MCF 10A (cell line): ENCODE measurements at regions of chr7 and their contacts with region 1.

Region 1: GRCh38 chr7:149742075-149742701 is 31.2 kb downstream of the ZNF467 start:
- DNase-seq: peak; percentile 67
- H3K4me3 Mint-ChIP-seq: peak overlapping the region; percentile 71
- H3K27ac Mint-ChIP-seq: no peak overlapping the region
- H3K4me1 Mint-ChIP-seq: peaks cover 8% of the 10 kb centered on the region
- H3K27me3 Mint-ChIP-seq: no peaks in the 10 kb centered on the region
- CTCF ChIP-seq: peak; percentile 93

Region 2: GRCh38 chr7:148575640-148576411 is 1166.4 kb before region 1 on chr7:
- CTCF ChIA-PET with region 1: no interaction called
- POLR2A ChIA-PET with region 1: no interaction called
- intact Hi-C with region 1: no loop called
- DNase-seq: peak; percentile 76
- H3K4me3 Mint-ChIP-seq: no peak overlapping the region
- H3K27ac Mint-ChIP-seq: no peak overlapping the region
- H3K4me1 Mint-ChIP-seq: no peaks in the 10 kb centered on the region
- H3K27me3 Mint-ChIP-seq: no peaks in the 10 kb centered on the region
- CTCF ChIP-seq: peak; percentile 87

Region 3: DNA sequence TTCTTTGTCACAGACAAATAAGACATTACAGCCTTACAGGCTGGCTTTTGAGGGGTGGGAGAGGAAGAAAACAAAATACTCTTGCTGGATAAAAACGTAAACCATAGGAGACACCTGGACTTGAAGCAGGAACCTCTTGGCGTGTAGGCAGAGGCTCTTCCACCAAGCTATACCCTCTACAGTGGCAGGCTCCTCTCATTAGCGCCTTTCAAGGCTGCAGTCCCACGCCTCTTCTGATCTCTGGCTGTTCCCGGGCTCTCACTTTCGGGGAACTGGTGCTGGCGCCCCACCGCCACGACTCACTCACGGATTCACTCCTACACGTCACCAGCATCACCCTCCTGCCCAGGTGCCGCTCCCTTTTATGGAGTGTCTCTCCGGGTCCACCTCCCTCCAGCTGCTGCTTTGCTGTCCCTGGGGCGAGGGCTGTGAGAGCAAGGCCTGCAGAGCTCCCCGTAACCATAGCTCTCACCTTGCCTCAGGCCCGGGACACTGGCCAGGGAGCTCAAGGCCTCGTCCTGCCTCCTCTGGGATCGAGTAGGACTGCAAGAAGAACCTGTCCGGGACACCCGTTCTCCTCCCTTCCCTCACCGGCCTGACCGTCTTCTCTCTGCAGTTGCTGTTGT is 343.9 kb before region 1 on chr7:
- CTCF ChIA-PET with region 1: no interaction called
- POLR2A ChIA-PET with region 1: no interaction called
- intact Hi-C with region 1: no loop called
- DNase-seq: no peak
- H3K4me3 Mint-ChIP-seq: no peak overlapping the region
- H3K27ac Mint-ChIP-seq: no peak overlapping the region
- H3K4me1 Mint-ChIP-seq: no peaks in the 10 kb centered on the region
- H3K27me3 Mint-ChIP-seq: peaks cover 21% of the 10 kb centered on the region
- CTCF ChIP-seq: no peak

Region 4: DNA sequence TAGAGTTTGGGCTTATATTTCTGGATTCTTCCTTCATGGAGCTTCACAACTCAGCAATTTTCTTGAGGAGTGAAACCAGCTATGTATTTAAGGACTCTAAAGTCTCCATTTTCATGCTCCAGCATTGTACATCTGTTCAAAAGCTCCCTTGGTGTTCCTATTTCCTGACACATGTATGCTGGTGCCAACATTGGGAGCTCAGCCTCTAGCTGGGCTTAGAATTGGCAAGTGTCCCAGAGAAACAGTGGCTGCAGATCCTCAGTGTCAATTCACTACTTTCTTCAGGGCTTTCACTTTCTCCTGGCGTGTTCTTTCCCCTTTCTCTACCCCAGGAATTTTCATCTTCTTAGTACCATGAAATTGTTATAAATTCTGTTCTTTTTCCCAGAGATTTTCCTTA is 71.9 kb before region 1 on chr7:
- CTCF ChIA-PET with region 1: interaction called, 18 read pairs
- POLR2A ChIA-PET with region 1: interaction called, 3 read pairs
- intact Hi-C with region 1: no loop called
- DNase-seq: peak; percentile 67
- H3K4me3 Mint-ChIP-seq: no peak overlapping the region
- H3K27ac Mint-ChIP-seq: no peak overlapping the region
- H3K4me1 Mint-ChIP-seq: no peaks in the 10 kb centered on the region
- H3K27me3 Mint-ChIP-seq: peaks cover 80% of the 10 kb centered on the region
- CTCF ChIP-seq: no peak

Region 5: DNA sequence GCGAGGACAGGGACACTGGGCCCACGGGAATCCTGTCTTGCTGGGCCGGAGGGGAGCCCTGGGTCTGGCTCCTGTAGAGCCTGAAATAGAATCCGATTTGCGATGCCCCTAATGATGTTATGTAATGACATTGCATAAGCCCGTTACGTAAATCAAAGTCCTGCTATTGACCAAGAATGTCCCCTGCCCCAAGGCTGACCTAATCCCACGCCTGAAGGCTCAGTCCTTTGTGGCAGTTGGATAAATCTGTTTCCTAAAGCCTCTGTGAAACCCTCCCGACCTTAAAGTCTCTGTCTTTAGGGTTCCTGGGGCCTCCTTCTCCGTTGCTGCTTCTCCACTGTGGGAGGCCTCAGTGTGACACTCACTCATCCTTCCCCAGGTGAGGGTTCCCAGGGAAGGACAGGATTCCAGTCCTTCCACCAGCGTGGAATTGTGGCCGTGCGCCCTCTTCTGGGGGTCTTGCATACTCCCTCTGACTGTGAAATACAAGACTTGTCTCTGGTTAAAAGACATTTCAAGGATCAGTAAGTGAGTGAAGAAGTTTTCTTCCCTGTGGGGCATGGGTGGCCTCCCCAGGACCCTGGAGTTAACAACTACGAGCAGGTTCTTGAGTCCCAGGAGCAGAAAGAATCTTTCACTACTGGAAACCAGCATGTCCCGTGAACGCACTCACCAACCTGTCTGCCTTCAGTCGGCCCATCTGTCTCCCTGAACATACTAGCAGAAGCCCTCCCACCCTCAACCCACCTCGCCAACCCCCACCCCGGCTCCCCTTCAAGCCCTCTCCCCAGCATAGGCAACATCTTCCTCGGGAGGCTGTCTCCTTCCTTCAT is 11.4 kb after region 1 on chr7:
- CTCF ChIA-PET with region 1: interaction called, 28 read pairs
- POLR2A ChIA-PET with region 1: interaction called, 5 read pairs
- intact Hi-C with region 1: no loop called
- DNase-seq: peak; percentile 60
- H3K4me3 Mint-ChIP-seq: no peak overlapping the region
- H3K27ac Mint-ChIP-seq: no peak overlapping the region
- H3K4me1 Mint-ChIP-seq: no peaks in the 10 kb centered on the region
- H3K27me3 Mint-ChIP-seq: no peaks in the 10 kb centered on the region
- CTCF ChIP-seq: peak; percentile 44

Region 6: GRCh38 chr7:149766135-149766675 is 24.0 kb after region 1 on chr7:
- CTCF ChIA-PET with region 1: interaction called, 15 read pairs
- POLR2A ChIA-PET with region 1: no interaction called
- intact Hi-C with region 1: no loop called
- DNase-seq: no peak
- H3K4me3 Mint-ChIP-seq: no peak overlapping the region
- H3K27ac Mint-ChIP-seq: no peak overlapping the region
- H3K4me1 Mint-ChIP-seq: no peaks in the 10 kb centered on the region
- H3K27me3 Mint-ChIP-seq: peaks cover 10% of the 10 kb centered on the region
- CTCF ChIP-seq: no peak

Region 7: DNA sequence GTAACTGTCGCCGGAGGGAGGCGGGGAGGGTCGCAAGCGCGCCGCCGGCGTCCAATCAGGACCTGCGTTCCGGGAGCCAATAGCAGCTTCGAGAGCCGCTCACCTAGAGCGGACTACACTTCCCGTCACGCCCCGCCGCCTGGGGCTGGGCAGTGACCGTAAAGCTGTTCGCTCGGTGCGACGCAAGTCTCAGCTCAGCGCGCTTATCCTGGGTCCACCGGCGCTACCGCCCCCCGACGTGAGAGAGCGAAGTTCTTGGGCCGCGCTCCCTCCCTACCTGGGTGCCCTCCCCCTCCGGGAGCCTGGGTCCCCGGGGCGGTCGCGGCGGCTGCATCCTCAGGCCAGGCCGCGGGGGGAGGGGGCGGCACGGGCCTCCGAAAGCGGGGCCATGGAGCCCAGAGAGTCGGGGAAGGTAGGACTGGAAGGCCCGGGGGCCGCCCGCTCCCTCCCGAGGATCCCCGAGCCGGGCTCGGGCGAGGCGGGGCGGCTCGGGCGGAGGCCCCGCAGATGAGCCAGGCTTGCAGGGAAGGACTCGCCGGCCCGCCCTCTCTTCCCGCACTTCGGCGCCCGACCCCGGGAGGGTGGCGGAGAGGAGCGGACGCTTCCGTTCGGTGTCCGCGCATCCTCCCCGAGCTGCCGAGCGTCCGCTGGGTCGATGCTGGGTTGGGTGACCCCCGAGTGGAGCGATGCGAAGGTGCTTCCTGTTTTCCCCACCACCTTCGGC is 96.2 kb after region 1 on chr7 and contains the start of gene ZNF862:
- CTCF ChIA-PET with region 1: no interaction called
- POLR2A ChIA-PET with region 1: no interaction called
- intact Hi-C with region 1: no loop called
- DNase-seq: peak; percentile 96
- H3K4me3 Mint-ChIP-seq: peak within 1 kb of the TSS; percentile 77
- H3K27ac Mint-ChIP-seq: peak within 1 kb of the TSS; percentile 52
- H3K4me1 Mint-ChIP-seq: peaks cover 10% of the 10 kb centered on the region
- H3K27me3 Mint-ChIP-seq: peaks cover 19% of the 10 kb centered on the region
- CTCF ChIP-seq: no peak
- total RNA-seq, gene ZNF862: 17.4 and 22.2 TPM in 2 replicates